Naive thymus-derived CD4-positive, alpha-beta T cell (primary cell): ENCODE measurements at regions of chr1 and their contacts with region 1.

Region 1: DNA sequence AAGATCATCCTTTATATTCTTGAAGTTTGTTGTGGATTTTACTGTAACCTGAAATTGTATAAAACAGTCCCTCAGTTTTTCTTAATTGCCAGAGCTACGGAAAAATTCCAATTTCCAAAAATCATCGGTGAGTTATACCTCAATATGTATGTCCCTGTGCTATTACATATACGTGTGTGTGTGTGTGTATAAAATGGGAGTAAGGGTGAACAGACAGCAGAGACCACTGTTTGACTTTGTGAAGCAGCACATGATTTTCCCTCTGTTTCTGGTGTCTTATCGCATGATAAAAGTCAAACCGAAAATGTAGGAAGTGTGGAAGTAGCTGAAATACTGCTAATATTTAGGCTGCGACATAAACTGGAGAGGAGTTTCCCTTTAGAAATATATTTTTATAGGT is 1.2 kb downstream of the OR2T1 start:
- DNase-seq: peak in 3 of 9 donors; percentile 6 to 32 (median 8)
- ATAC-seq: peak; percentile 91
- H3K4me3 ChIP-seq: no peak overlapping the region
- H3K4me3 Mint-ChIP-seq: no peak overlapping the region
- H3K27ac ChIP-seq: no peak overlapping the region
- H3K27ac Mint-ChIP-seq: peak overlapping the region in 4 of 9 donors; percentile 0 to 5 (median 0)
- H3K4me1 ChIP-seq: no peaks in the 10 kb centered on the region
- H3K4me1 Mint-ChIP-seq: peaks cover 0 to 16% (median 4%) of the 10 kb centered on the region in 7 donors
- H3K27me3 ChIP-seq: no peaks in the 10 kb centered on the region
- H3K27me3 Mint-ChIP-seq: no peaks in the 10 kb centered on the region

Region 2: DNA sequence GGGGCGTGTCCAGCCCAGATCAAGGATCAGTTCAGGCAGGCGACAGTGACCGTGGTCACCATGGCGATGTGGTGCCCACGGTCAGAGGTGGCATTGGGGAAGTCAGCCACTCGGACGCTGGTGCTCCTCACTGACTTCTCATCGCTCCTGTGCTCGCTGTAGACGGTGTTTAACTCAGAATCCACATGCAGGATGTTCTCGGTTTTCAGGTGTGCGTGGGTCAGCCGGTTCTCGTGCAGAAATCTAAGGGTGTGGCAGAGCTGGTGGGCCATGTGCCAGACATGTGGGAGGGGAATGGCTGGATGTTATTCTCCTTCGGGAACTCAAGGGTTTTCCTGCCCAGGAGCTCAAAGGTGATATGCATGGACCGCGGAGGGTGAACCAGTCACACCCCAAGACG is 467.6 kb before region 1 on chr1:
- CTCF ChIA-PET with region 1: no interaction called
- POLR2A ChIA-PET with region 1: no interaction called
- intact Hi-C with region 1: loop called in 1 of 2 experiments (anchors 10 kb)
- DNase-seq: no peak
- ATAC-seq: no peak
- H3K4me3 ChIP-seq: no peak overlapping the region
- H3K4me3 Mint-ChIP-seq: peak overlapping the region in 3 of 10 donors; percentile 5 to 88 (median 43)
- H3K27ac ChIP-seq: no peak overlapping the region
- H3K27ac Mint-ChIP-seq: peak overlapping the region in 1 of 9 donors; percentile 41
- H3K4me1 ChIP-seq: no peaks in the 10 kb centered on the region
- H3K4me1 Mint-ChIP-seq: peaks cover 0 to 15% (median 0%) of the 10 kb centered on the region in 7 donors
- H3K27me3 ChIP-seq: no peaks in the 10 kb centered on the region
- H3K27me3 Mint-ChIP-seq: peaks cover 0 to 6% (median 2%) of the 10 kb centered on the region in 5 donors

Region 3: GRCh38 chr1:248361121-248361715 is 42.8 kb before region 1 on chr1 and contains the start of gene OR2T4:
- CTCF ChIA-PET with region 1: no interaction called
- POLR2A ChIA-PET with region 1: no interaction called
- intact Hi-C with region 1: no loop called
- DNase-seq: no peak
- ATAC-seq: no peak
- H3K4me3 ChIP-seq: no peak within 1 kb of the TSS
- H3K4me3 Mint-ChIP-seq: no peak within 1 kb of the TSS
- H3K27ac ChIP-seq: no peak within 1 kb of the TSS
- H3K27ac Mint-ChIP-seq: no peak within 1 kb of the TSS
- H3K4me1 ChIP-seq: no peaks in the 10 kb centered on the region
- H3K4me1 Mint-ChIP-seq: no peaks in the 10 kb centered on the region
- H3K27me3 ChIP-seq: no peaks in the 10 kb centered on the region
- H3K27me3 Mint-ChIP-seq: peaks cover 0 to 32% (median 14%) of the 10 kb centered on the region in 5 donors
- total RNA-seq, gene OR2T4: not detected

Region 4: GRCh38 chr1:248585266-248585665 is 181.2 kb after region 1 on chr1:
- CTCF ChIA-PET with region 1: no interaction called
- POLR2A ChIA-PET with region 1: no interaction called
- intact Hi-C with region 1: loop called in 1 of 2 experiments (anchors 10 kb)
- DNase-seq: no peak
- ATAC-seq: no peak
- H3K4me3 ChIP-seq: no peak overlapping the region
- H3K4me3 Mint-ChIP-seq: peak overlapping the region in 1 of 10 donors; percentile 7
- H3K27ac ChIP-seq: no peak overlapping the region
- H3K27ac Mint-ChIP-seq: no peak overlapping the region
- H3K4me1 ChIP-seq: no peaks in the 10 kb centered on the region
- H3K4me1 Mint-ChIP-seq: peaks cover 0 to 19% (median 0%) of the 10 kb centered on the region in 7 donors
- H3K27me3 ChIP-seq: no peaks in the 10 kb centered on the region
- H3K27me3 Mint-ChIP-seq: peaks cover 0 to 2% (median 0%) of the 10 kb centered on the region in 5 donors

Region 5: DNA sequence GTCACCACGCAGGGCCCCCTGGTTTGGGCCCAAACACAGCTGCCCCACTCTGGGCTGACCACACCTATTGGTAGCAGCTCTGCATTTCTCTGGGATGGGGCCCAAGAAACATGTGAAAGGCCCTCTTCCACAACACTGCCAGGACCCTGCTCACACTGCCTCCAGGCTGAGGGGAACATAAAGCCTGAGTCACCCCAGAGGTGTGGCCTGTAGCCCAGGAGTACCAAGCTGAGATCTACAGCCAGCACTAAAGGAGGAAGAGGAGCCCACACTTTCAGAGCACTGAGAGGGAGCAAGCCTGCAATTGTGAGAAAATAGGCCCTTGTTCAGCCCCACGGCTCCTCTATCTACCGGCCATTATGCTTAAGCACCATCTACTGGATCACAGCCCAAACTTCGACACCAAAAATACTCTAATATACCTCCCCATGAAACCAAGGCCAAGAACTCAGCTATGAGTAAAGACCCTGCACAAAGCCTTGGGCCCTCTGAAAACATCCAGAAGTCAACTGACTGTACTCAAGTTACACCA is 207.9 kb after region 1 on chr1:
- CTCF ChIA-PET with region 1: interaction called, 8 read pairs
- POLR2A ChIA-PET with region 1: no interaction called
- intact Hi-C with region 1: loop called (anchors 1 kb)
- DNase-seq: peak in 4 of 9 donors; percentile 11 to 33 (median 20)
- ATAC-seq: no peak
- H3K4me3 ChIP-seq: no peak overlapping the region
- H3K4me3 Mint-ChIP-seq: no peak overlapping the region
- H3K27ac ChIP-seq: no peak overlapping the region
- H3K27ac Mint-ChIP-seq: peak overlapping the region in 3 of 9 donors; percentile 5 to 57 (median 25)
- H3K4me1 ChIP-seq: no peaks in the 10 kb centered on the region
- H3K4me1 Mint-ChIP-seq: peaks cover 0 to 31% (median 5%) of the 10 kb centered on the region in 7 donors
- H3K27me3 ChIP-seq: no peaks in the 10 kb centered on the region
- H3K27me3 Mint-ChIP-seq: no peaks in the 10 kb centered on the region